ENCODE measurements at regions of chr12 and their contacts with region 1.

Region 1: DNA sequence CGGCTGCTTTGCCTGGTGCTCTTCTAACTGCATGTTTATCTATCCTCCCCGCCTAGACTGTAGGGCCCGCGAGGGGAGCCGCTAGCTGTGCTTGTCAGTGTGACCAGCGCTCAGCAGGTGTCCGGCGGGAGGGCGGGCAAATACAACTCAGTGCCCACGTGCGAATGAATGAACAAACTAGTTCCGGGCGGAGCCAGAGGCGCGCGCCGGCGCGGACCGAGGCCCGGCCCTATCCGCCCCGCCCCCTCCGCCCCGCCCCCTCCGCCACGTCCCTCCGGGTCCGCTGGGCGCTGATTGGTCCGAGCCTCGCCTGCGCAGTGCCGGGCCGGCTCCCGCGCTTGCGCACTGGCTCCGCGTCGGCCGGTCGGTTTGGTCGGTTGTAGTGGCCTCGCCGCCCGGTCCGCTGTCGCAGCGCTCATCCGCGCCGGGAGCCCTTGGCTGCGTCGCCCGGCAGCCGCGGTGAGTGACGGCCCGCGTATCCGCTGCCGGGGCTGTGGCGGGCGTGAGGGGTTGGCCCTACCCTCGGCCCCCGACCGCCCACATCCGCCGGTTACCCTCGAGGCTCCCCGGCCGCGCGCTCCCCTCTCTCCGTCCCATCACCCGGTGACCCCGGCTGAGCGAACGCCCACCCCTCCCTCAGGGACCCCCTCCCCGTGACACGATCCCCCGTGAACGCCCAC is 60.0 kb downstream of the DDX51 start:
- DNase-seq: peak; percentile 75 to 93 (median 83)
- ATAC-seq: peak; percentile 97
- H3K4me3 ChIP-seq: peak overlapping the region; percentile 52
- H3K4me3 Mint-ChIP-seq: peak overlapping the region; percentile 85 to 98 (median 91)
- H3K27ac ChIP-seq: peak overlapping the region; percentile 89
- H3K27ac Mint-ChIP-seq: peak overlapping the region in 8 of 9 donors; percentile 74 to 93 (median 88)
- H3K4me1 ChIP-seq: peaks cover 9 to 10% of the 10 kb centered on the region in 2 donors
- H3K4me1 Mint-ChIP-seq: peaks cover 17 to 35% (median 28%) of the 10 kb centered on the region in 7 donors
- H3K27me3 ChIP-seq: no peaks in the 10 kb centered on the region
- H3K27me3 Mint-ChIP-seq: no peaks in the 10 kb centered on the region

Region 2: DNA sequence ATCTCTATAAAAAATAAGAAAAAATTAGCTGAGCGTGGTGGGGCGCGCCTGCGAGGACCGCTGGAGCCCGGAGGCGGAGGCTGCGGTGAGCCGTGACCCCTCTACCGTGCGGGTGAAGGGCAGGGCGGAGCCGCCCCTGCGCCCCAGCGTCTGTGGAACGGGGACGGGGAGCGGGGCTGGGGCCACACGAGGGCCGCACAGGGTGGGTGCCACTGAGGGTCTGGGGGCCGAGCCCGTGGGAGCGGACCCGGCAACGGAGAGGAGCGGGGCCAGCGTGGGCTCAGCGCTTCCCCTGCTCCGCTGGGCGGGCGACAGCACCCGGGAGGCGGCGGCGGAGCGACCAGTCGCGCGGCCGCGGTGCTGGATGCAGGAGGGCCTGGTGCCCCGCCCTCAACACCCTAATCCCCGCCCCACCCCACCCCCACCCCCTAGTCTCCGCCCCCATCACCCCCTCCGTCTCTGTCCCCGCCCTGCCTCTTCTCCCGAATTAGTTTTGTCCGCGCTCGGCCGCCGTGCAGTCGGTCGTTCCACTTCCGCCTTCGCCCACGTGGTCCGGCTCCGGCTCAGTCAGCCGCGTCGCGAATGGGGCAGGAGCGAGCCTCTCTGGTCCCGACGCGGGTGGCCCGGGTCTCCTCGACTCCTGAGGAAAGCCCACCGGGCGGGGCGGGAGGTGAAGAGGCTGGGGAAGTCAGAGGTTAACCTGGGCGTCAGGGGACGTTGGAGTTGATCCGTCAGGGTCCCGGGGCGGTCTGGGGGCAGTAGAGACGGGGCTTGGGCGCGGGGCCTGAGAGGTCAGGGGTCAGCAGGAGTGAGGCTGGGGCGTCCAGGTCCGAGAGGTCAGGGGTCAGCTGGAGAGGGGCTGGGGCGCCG is 155.1 kb before region 1 on chr12 and contains the start of gene PUS1:
- CTCF ChIA-PET with region 1: no interaction called
- POLR2A ChIA-PET with region 1: no interaction called
- intact Hi-C with region 1: loop called in 1 of 2 experiments (anchors 1 kb)
- DNase-seq: peak; percentile 84 to 95 (median 93)
- ATAC-seq: peak; percentile 95
- H3K4me3 ChIP-seq: peak within 1 kb of the TSS; percentile 75
- H3K4me3 Mint-ChIP-seq: peak within 1 kb of the TSS; percentile 87 to 100 (median 92)
- H3K27ac ChIP-seq: peak within 1 kb of the TSS; percentile 89
- H3K27ac Mint-ChIP-seq: peak within 1 kb of the TSS; percentile 79 to 97 (median 88)
- H3K4me1 ChIP-seq: no peaks in the 10 kb centered on the region
- H3K4me1 Mint-ChIP-seq: peaks cover 13 to 28% (median 25%) of the 10 kb centered on the region in 7 donors
- H3K27me3 ChIP-seq: no peaks in the 10 kb centered on the region
- H3K27me3 Mint-ChIP-seq: no peaks in the 10 kb centered on the region
- total RNA-seq, gene PUS1: 23.4 to 54.9 (median 49.2) TPM

Region 3: DNA sequence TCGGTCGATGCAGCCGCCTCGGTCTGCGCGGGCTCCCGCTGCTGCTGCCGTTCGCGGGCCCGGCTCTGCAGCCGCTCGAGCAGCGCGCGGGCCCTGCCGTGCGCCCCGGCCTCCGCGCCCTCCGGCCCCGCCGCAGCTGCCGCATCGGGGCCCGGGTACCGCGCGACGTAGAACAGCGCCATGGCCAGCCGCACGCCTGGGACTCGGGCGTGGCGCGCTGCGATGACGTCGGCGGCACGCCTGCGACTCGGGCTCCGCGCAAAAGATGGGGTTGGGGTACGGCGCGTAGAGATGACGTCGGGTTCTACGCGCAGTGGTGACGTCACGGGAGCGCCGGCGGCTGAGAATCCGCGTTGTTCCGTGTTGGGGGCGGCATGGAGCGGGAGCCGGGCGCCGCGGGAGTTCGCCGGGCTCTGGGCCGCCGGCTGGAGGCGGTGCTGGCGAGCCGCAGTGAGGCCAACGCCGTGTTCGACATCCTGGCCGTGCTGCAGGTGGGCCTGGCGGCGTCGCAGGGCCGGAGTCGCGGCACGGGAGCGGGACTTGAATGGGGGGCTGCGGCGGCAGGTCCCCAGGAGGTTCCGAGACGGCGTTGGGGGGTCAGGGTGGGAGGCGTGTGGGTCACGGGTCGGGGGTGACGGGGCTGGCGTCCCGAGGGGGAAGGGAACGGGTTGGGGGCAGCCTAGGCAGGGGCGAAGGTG is 60.2 kb after region 1 on chr12 and contains the starts of genes DDX51 and NOC4L:
- CTCF ChIA-PET with region 1: no interaction called
- POLR2A ChIA-PET with region 1: interaction called, 3 read pairs
- intact Hi-C with region 1: loop called (anchors 1 kb)
- DNase-seq: peak; percentile 93 to 99 (median 96)
- ATAC-seq: peak; percentile 98
- H3K4me3 ChIP-seq: peak within 1 kb of the TSS; percentile 80
- H3K4me3 Mint-ChIP-seq: peak within 1 kb of the TSS; percentile 85 to 97 (median 90)
- H3K27ac ChIP-seq: peak within 1 kb of the TSS; percentile 92
- H3K27ac Mint-ChIP-seq: peak within 1 kb of the TSS; percentile 83 to 99 (median 96)
- H3K4me1 ChIP-seq: peaks cover 21 to 23% of the 10 kb centered on the region in 2 donors
- H3K4me1 Mint-ChIP-seq: peaks cover 21 to 38% (median 29%) of the 10 kb centered on the region in 7 donors
- H3K27me3 ChIP-seq: no peaks in the 10 kb centered on the region
- H3K27me3 Mint-ChIP-seq: peaks cover 0 to 2% (median 0%) of the 10 kb centered on the region in 5 donors
- total RNA-seq, gene DDX51: 33.2 to 54.8 (median 50.6) TPM
- total RNA-seq, gene NOC4L: 19.3 to 27.1 (median 21.1) TPM

Region 4: DNA sequence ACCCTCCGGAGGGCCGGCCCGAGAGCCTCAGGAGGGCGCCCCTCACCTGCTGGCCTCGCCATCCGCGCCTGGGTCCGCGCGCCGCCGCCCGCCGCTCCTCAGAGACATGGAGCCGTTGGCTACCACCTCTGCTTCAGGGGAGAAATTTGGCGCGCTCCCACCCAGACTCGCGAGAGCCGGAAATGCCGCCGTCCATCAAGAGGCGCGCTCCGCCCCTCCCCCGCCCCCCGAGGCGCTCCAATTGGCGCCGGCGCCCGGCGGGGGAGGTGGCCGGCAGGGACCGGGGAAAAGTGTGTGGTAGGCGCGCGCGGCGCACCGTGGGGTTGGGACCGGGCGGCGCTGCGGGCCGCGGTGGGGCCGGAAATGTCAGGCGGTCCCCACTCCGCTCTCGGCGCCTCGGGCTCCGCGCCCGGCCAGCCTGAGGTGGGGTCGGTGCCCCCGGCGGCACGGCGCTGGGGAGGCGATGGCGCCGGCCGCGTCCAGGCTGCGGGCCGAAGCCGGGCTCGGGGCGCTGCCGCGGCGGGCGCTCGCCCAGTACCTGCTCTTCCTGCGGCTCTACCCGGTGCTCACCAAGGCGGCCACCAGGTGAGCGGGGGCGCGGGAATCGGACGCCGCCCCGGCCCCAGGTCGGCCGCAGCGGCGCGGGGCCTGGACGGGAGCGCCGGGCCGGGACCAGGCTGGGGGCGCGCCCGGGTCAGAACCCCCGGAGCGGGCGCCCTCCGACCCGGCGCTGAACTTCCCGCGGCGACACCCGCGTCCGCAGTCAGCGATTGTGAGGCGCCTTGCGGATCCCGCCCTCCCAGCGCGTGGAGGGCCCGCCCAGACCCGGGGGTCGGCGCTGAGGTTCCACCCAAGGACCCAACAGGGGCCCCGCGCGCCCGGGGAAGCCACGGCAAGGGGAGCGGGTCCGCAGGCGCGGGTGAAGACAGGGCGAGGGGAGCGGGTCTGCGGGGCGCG is 603.4 kb after region 1 on chr12 and contains the starts of genes POLE and PXMP2:
- CTCF ChIA-PET with region 1: no interaction called
- POLR2A ChIA-PET with region 1: no interaction called
- intact Hi-C with region 1: loop called in 1 of 2 experiments (anchors 10 kb)
- DNase-seq: peak; percentile 85 to 94 (median 89)
- ATAC-seq: peak; percentile 98
- H3K4me3 ChIP-seq: peak within 1 kb of the TSS; percentile 47
- H3K4me3 Mint-ChIP-seq: peak within 1 kb of the TSS; percentile 65 to 89 (median 84)
- H3K27ac ChIP-seq: peak within 1 kb of the TSS; percentile 58
- H3K27ac Mint-ChIP-seq: peak within 1 kb of the TSS in 3 of 9 donors; percentile 45 to 92 (median 87)
- H3K4me1 ChIP-seq: peaks cover 4 to 14% of the 10 kb centered on the region in 2 donors
- H3K4me1 Mint-ChIP-seq: peaks cover 0 to 31% (median 22%) of the 10 kb centered on the region in 7 donors
- H3K27me3 ChIP-seq: no peaks in the 10 kb centered on the region
- H3K27me3 Mint-ChIP-seq: no peaks in the 10 kb centered on the region
- total RNA-seq, gene POLE: 54.5 to 138 (median 62.1) TPM
- total RNA-seq, gene PXMP2: 2.6 to 26.8 (median 5.4) TPM